A673 (cell line): ENCODE measurements at regions of chr6 and their contacts with region 1.

Region 1: GRCh38 chr6:24391756-24392405 is 10.9 kb upstream of the MRS2 start:
- DNase-seq: no peak
- H3K4me3 ChIP-seq: no peak overlapping the region
- H3K27ac ChIP-seq: no peak overlapping the region
- H3K4me1 ChIP-seq: peaks cover 14% of the 10 kb centered on the region
- H3K27me3 ChIP-seq: no peaks in the 10 kb centered on the region
- CTCF ChIP-seq: no peak

Region 2: DNA sequence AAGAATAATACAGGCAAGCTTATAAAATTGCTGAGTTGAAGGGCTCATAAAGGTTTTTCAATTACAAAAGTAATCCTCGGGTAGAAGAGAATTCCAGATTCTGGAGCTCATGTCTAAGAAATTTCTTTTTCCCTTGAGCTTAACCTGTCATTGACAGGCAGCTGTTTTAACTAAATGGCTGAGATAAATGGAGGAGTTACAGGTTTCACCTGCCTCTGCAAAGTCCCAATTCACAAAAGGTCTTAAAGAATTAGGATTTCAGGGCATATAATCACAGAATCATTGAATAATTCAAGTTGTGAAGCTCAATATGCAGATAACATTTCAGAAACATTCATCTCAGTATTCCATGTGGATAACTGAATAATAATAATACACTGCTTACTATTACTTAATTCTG is 926.0 kb before region 1 on chr6:
- CTCF ChIA-PET with region 1: interaction called, 18 read pairs
- POLR2A ChIA-PET with region 1: no interaction called
- intact Hi-C with region 1: no loop called
- DNase-seq: no peak
- H3K4me3 ChIP-seq: no peak overlapping the region
- H3K27ac ChIP-seq: no peak overlapping the region
- H3K4me1 ChIP-seq: peaks cover 4% of the 10 kb centered on the region
- H3K27me3 ChIP-seq: peaks cover 5% of the 10 kb centered on the region
- CTCF ChIP-seq: no peak

Region 3: GRCh38 chr6:24855395-24856245 is 463.7 kb after region 1 on chr6:
- CTCF ChIA-PET with region 1: no interaction called
- POLR2A ChIA-PET with region 1: no interaction called
- intact Hi-C with region 1: no loop called
- DNase-seq: peak; percentile 79
- H3K4me3 ChIP-seq: no peak overlapping the region
- H3K27ac ChIP-seq: no peak overlapping the region
- H3K4me1 ChIP-seq: peaks cover 5% of the 10 kb centered on the region
- H3K27me3 ChIP-seq: no peaks in the 10 kb centered on the region
- CTCF ChIP-seq: peak; percentile 89

Region 4: GRCh38 chr6:25652007-25652515 is 1260.2 kb after region 1 on chr6 and contains the start of gene SCGN:
- CTCF ChIA-PET with region 1: no interaction called
- POLR2A ChIA-PET with region 1: no interaction called
- intact Hi-C with region 1: no loop called
- DNase-seq: peak; percentile 78
- H3K4me3 ChIP-seq: no peak within 1 kb of the TSS
- H3K27ac ChIP-seq: no peak within 1 kb of the TSS
- H3K4me1 ChIP-seq: no peaks in the 10 kb centered on the region
- H3K27me3 ChIP-seq: peaks cover 65% of the 10 kb centered on the region
- CTCF ChIP-seq: no peak
- total RNA-seq, gene SCGN: not detected in 2 replicates